ENCODE measurements at regions of chr6 and their contacts with region 1.

Region 1: GRCh38 chr6:90251295-90251992 is 45.2 kb downstream of the BACH2 start:
- DNase-seq: peak; percentile 84
- H3K4me3 ChIP-seq: peak overlapping the region; percentile 24
- H3K27ac ChIP-seq: peak overlapping the region; percentile 84
- H3K4me1 ChIP-seq: peaks cover 72% of the 10 kb centered on the region
- CTCF ChIP-seq: no peak

Region 2: GRCh38 chr6:88499845-88500699 is 1751.4 kb before region 1 on chr6:
- CTCF ChIA-PET with region 1: no interaction called
- POLR2A ChIA-PET with region 1: no interaction called
- intact Hi-C with region 1: loop called (anchors 10 kb)
- DNase-seq: peak; percentile 87
- H3K4me3 ChIP-seq: peak overlapping the region; percentile 33
- H3K27ac ChIP-seq: peak overlapping the region; percentile 89
- H3K4me1 ChIP-seq: peaks cover 32% of the 10 kb centered on the region
- CTCF ChIP-seq: no peak

Region 3: GRCh38 chr6:90263633-90264032 is 12.2 kb after region 1 on chr6:
- CTCF ChIA-PET with region 1: interaction called, 3 read pairs
- POLR2A ChIA-PET with region 1: interaction called, 9 read pairs
- intact Hi-C with region 1: loop called (anchors 2 kb)
- DNase-seq: no peak
- H3K4me3 ChIP-seq: no peak overlapping the region
- H3K27ac ChIP-seq: no peak overlapping the region
- H3K4me1 ChIP-seq: peaks cover 28% of the 10 kb centered on the region
- CTCF ChIP-seq: no peak